Sigmoid colon (tissue), 7 donors: ENCODE measurements at regions of chr15 and their contacts with region 1.

Region 1: GRCh38 chr15:99565299-99566156 is at the start of gene MEF2A:
- DNase-seq: peak; percentile 98
- H3K4me3 ChIP-seq: peak within 1 kb of the TSS; percentile 91 to 98 (median 96)
- H3K27ac ChIP-seq: peak within 1 kb of the TSS; percentile 99 to 100 (median 100)
- H3K4me1 ChIP-seq: peaks cover 0 to 50% (median 36%) of the 10 kb centered on the region in 4 donors
- H3K27me3 ChIP-seq: no peaks in the 10 kb centered on the region
- CTCF ChIP-seq: no peak
- EP300 ChIP-seq: peak in 1 of 4 donors; percentile 54
- POLR2A ChIP-seq: peak; percentile 73 to 88
- total RNA-seq, gene MEF2A: 78.8 to 123 (median 80.3) TPM

Region 2: GRCh38 chr15:99385865-99386264 is 179.7 kb before region 1 on chr15:
- intact Hi-C with region 1: no loop called
- DNase-seq: no peak
- H3K4me3 ChIP-seq: no peak overlapping the region
- H3K27ac ChIP-seq: peak overlapping the region in 3 of 4 donors; percentile 11 to 40 (median 33)
- H3K4me1 ChIP-seq: peaks cover 0 to 17% (median 12%) of the 10 kb centered on the region in 4 donors
- H3K27me3 ChIP-seq: no peaks in the 10 kb centered on the region
- CTCF ChIP-seq: no peak
- EP300 ChIP-seq: no peak
- POLR2A ChIP-seq: no peak

Region 3: GRCh38 chr15:99409097-99409473 is 156.4 kb before region 1 on chr15:
- intact Hi-C with region 1: loop called (anchors 5 kb)
- DNase-seq: peak; percentile 80
- H3K4me3 ChIP-seq: no peak overlapping the region
- H3K27ac ChIP-seq: peak overlapping the region; percentile 42 to 64 (median 48)
- H3K4me1 ChIP-seq: peaks cover 0 to 23% (median 20%) of the 10 kb centered on the region in 4 donors
- H3K27me3 ChIP-seq: no peaks in the 10 kb centered on the region
- CTCF ChIP-seq: peak; percentile 16 to 47 (median 43)
- EP300 ChIP-seq: no peak
- POLR2A ChIP-seq: no peak

Region 4: DNA sequence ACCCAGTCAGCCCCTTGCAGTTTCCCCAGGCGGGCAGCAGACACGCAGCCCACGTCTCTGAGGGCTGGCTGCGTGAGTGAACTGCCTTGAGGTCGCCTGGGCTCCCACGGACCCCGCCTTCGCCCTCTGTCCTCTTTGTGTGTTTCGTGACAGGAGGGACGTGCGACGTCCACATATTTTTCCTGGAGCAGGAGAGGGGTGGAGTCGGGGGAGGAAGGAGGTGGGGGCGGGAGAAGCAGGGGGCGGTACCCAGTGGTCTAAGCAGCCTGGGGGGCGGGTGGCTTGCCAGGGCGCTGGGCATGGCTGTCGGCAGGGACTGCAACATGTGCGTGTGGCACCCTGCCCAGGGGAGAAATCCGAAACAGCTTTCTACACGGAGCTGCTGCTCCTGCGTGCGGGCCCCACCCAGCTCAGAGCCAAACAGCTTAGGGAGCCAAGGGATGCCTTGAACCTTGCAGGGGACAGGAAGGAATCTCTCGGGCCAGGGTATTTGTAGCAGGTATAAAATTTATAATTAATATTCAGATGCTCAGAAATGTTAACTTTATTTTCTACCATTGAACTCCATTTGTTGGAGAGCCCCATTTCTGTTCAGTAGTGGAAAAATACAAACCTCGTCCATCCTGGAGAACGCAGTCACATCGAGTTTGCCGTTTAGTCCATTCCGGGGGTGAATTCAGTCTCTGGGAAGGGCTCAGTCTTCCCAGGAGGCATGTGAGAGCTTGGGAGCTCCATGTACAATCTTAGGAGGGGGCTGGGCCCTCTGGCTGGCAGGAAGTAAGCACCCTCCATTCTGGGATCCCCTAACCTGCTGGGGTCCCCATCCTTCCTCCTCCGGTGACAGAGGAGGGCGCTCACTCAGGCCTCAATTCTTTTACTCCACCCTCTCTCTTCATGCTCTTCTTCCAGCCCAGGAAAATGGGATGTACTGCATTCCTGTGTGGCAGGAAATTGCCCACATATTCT is 78.9 kb before region 1 on chr15:
- intact Hi-C with region 1: loop called (anchors 5 kb)
- DNase-seq: peak; percentile 88
- H3K4me3 ChIP-seq: peak overlapping the region; percentile 18 to 49 (median 48)
- H3K27ac ChIP-seq: peak overlapping the region; percentile 54 to 71 (median 60)
- H3K4me1 ChIP-seq: peaks cover 0 to 25% (median 16%) of the 10 kb centered on the region in 4 donors
- H3K27me3 ChIP-seq: no peaks in the 10 kb centered on the region
- CTCF ChIP-seq: no peak
- EP300 ChIP-seq: no peak
- POLR2A ChIP-seq: no peak

Region 5: DNA sequence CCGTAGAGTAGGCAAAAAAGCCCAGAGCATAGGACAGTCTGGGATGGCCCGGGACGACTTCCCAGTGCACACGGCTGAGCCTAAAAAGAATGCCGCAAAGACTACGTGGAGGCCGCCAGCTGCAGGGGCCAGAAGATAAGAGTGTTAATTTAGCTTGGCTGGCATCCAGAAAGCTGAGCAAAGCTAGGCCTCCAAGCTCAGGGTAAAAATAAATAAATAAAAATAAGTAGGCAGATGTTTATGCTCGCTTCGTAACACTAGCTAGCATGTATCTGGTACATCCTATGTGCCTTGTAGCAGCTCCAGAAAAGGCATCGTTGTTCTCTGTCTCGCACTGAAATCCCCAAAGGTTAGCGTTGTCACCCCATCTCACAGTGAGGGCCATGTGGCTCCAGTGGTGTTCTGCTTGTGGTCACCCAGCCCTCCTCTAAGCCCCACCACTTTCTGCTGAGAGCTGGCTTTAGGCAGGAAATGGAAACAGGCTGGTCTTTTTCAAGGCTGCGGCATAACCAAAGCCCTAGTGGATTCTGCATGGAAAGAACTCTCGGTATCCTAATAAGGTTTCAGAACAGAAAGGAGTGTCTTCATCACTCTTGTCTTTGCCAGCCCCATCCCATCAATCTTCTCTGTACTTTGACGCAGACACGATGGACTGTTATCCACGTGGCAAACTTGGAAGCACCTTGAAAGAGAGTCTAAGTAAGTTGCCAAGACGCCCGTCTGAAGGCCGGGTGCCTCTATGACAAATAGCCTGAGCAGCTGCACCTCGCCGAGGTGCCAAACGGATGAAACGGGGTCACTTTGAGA is 57.8 kb before region 1 on chr15:
- intact Hi-C with region 1: loop called (anchors 2 kb)
- DNase-seq: peak; percentile 80
- H3K4me3 ChIP-seq: no peak overlapping the region
- H3K27ac ChIP-seq: peak overlapping the region; percentile 59 to 82 (median 76)
- H3K4me1 ChIP-seq: peaks cover 0 to 44% (median 31%) of the 10 kb centered on the region in 4 donors
- H3K27me3 ChIP-seq: no peaks in the 10 kb centered on the region
- CTCF ChIP-seq: no peak
- EP300 ChIP-seq: peak in 3 of 4 donors; percentile 21 to 63 (median 61)
- POLR2A ChIP-seq: no peak

Region 6: GRCh38 chr15:99614749-99615288 is 49.3 kb after region 1 on chr15:
- intact Hi-C with region 1: loop called (anchors 5 kb)
- DNase-seq: no peak
- H3K4me3 ChIP-seq: no peak overlapping the region
- H3K27ac ChIP-seq: peak overlapping the region in 3 of 4 donors; percentile 22 to 51 (median 45)
- H3K4me1 ChIP-seq: peaks cover 0 to 76% (median 55%) of the 10 kb centered on the region in 4 donors
- H3K27me3 ChIP-seq: no peaks in the 10 kb centered on the region
- CTCF ChIP-seq: no peak
- EP300 ChIP-seq: no peak
- POLR2A ChIP-seq: no peak

Region 7: GRCh38 chr15:99671926-99672635 is 106.6 kb after region 1 on chr15:
- intact Hi-C with region 1: loop called (anchors 5 kb)
- DNase-seq: no peak
- H3K4me3 ChIP-seq: no peak overlapping the region
- H3K27ac ChIP-seq: no peak overlapping the region
- H3K4me1 ChIP-seq: peaks cover 0 to 26% (median 17%) of the 10 kb centered on the region in 4 donors
- H3K27me3 ChIP-seq: no peaks in the 10 kb centered on the region
- CTCF ChIP-seq: no peak
- EP300 ChIP-seq: no peak
- POLR2A ChIP-seq: no peak

Region 8: GRCh38 chr15:99704444-99704838 is 138.9 kb after region 1 on chr15:
- intact Hi-C with region 1: loop called (anchors 1 kb)
- DNase-seq: no peak
- H3K4me3 ChIP-seq: no peak overlapping the region
- H3K27ac ChIP-seq: peak overlapping the region; percentile 60 to 87 (median 79)
- H3K4me1 ChIP-seq: peaks cover 0 to 47% (median 30%) of the 10 kb centered on the region in 4 donors
- H3K27me3 ChIP-seq: no peaks in the 10 kb centered on the region
- CTCF ChIP-seq: peak; percentile 68 to 83 (median 74)
- EP300 ChIP-seq: no peak
- POLR2A ChIP-seq: no peak